ENCODE measurements at regions of chr16 and their contacts with region 1.

Region 1: DNA sequence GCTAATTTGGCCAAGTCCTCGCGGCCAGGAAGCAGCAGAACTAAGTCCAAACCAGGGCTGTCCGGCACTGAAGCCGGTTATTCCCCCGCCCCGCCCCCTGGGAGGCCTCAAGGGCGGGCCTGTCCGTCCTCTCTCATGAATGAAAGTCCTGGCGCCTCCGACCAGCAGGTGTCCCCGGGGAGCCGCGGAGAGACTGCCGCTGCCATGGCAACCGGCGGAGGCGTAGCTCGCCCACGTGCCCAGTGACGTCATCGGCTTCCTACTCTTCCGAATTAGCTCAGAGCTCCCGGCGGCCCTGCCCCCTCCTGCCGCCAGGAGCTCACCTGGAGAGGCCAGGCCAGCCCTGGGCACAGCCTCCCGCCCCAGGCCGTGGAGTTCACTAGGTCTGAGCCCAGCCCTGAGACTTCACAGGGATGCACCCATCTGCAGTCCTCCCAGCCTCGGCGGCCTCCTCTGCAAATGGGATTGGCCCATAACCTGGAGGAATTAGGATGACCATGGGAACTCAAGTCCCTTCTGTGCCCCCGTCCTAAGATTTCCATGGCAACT is 1.3 kb downstream of the SPATA2L start:
- DNase-seq: peak; percentile 99
- ATAC-seq: peak; percentile 82
- H3K4me3 ChIP-seq: peak overlapping the region; percentile 65
- H3K27ac ChIP-seq: peak overlapping the region; percentile 27
- H3K4me1 ChIP-seq: peaks cover 3% of the 10 kb centered on the region
- H3K27me3 ChIP-seq: no peaks in the 10 kb centered on the region

Region 2: DNA sequence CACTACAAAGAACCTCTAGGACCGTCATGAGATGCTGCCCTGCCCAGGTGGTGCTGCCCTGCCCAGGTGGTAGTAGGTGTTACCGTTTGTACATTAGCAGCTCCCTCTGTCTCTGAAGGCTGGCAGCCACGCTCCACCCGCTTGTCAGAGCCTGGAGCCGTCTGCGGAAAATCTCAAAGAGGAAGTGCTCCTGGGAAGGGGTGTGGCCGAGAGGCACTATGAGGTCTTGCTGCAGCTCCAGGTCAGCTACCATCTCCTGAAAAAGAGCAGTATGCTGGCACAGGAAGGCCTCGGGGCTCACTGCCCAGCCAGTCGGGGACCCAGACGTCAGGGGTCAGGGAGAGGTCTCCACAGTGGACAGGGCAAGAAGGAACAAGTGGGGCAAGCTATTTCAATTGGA is 49.5 kb after region 1 on chr16:
- intact Hi-C with region 1: no loop called
- DNase-seq: peak; percentile 32 to 77 (median 74)
- ATAC-seq: peak; percentile 67 to 77
- H3K4me3 ChIP-seq: no peak overlapping the region
- H3K27ac ChIP-seq: no peak overlapping the region
- H3K4me1 ChIP-seq: no peaks in the 10 kb centered on the region
- H3K27me3 ChIP-seq: no peaks in the 10 kb centered on the region

Region 3: DNA sequence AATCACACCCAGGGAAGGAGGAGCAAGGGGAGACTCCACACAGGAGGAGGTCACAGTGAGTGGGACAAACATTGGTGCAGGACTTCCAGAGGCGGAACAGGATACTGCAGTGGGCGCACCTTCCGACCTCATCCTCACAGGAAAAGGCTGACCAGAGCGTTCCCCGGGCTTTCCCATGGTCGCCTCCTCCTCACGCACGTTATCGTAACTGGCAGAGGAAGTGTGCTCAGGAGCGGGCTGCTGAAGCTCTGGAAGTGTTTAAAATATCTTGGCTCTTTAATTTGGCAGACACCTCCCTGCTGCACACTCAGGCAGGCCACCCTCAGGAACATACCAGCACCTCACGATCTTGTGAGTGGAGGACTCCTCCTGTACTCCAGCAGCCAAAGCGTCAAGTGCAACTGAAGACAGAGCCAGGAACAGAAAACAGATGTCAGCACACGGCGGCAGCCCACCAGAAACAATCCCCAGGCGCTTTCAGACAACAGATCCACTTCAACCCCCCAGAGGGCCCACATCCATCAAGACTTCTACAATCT is 98.7 kb after region 1 on chr16:
- intact Hi-C with region 1: loop called in 2 of 4 experiments (anchors 5 to 10 kb)
- DNase-seq: peak; percentile 55 to 80 (median 79)
- ATAC-seq: peak; percentile 89 to 94
- H3K4me3 ChIP-seq: no peak overlapping the region
- H3K27ac ChIP-seq: peak overlapping the region; percentile 74
- H3K4me1 ChIP-seq: no peaks in the 10 kb centered on the region
- H3K27me3 ChIP-seq: no peaks in the 10 kb centered on the region